ENCODE measurements at regions of chr4 and their contacts with region 1.

Region 1: DNA sequence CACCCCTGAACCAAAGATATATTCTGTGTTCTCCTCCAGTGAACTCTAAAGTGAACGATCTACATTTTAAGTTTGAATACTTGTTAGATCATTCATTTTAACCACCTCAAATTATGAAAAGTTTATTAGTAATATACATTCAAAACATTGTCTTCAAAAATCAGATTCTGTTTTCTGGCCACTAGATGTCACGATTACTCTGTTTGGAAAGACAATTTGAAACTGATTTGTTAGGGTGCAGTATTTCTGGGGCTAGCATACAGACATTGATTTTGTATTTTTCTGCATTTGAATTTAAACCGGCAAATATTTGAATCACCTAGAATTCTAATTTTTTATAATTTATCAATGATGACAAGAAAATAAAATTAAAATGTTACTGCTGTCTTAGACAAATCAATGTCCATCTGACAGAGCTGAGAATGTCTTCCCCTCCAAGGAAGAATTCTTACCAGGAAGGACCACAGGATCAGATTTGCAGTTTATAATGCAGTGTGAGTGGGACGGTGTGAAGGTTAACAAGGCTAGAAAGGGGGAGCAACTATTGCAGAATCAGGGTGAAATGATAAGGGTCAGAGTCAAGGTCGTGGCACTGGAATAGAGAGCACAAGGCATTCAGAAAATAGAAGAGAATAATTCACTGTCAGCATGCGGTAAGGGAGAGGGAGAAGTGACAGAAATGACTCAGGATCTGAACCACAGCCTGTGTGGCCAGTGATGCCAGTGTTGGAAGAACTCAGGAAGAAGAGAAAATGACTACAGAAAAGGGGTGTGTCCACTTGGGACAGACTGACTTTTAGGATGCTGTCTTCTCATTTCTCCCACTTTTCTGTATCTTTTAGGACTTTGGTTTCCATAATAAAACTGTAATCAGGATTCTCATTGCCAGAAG is 91.6 kb downstream of the ANXA10 start:
- DNase-seq: no peak
- H3K4me3 ChIP-seq: no peak overlapping the region
- CTCF ChIP-seq: peak; percentile 48

Region 2: DNA sequence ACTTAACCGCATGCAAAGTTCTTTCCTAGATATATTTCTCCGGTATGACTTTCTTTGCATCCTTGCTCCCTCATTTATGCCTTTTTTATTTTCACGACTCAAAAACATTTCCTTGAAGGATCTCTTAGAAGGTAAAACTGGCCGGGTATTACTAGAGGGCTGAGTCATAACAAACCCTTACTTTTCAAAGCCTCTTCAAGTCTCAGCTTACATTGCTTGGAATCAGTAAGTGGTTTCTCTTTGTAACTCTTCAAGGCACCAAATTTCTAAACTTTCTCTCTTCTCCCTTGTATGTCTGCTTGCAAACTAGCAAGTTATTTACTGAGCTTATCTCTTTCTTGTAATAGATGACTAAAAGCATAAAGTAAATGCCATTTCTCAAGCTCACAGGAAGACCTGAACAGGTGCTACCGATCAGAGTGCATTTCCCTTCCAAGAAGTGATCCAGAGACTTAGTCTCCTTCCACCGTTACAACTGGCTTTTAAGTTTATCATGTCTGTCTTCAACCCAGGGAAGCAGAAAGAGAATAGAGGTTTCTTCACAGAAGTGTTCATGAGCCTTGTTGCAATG is 16.2 kb before region 1 on chr4:
- CTCF ChIA-PET with region 1: interaction called, 11 read pairs
- POLR2A ChIA-PET with region 1: no interaction called
- DNase-seq: peak; percentile 16
- H3K4me3 ChIP-seq: no peak overlapping the region
- CTCF ChIP-seq: no peak